Mammary epithelial cell (primary cell): ENCODE measurements at regions of chr6 and their contacts with region 1.

Region 1: DNA sequence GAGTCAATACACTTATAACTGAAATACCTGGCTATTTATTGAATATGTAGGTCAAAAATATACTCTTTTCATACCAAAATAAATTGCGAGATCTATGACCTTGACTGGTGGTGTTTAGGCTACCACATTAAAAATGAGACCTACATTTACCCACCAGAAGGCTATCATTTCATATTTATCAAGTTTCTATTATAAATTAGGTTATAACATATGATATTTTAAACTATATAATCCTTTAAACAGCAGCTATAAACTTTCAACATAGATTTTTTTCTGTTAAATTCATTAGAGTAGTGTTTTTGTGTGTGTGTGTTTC is 586.1 kb downstream of the HTR1B start:
- DNase-seq: no peak
- H3K4me3 ChIP-seq: no peak overlapping the region
- H3K27ac ChIP-seq: no peak overlapping the region
- H3K4me1 ChIP-seq: no peaks in the 10 kb centered on the region
- H3K27me3 ChIP-seq: no peaks in the 10 kb centered on the region
- CTCF ChIP-seq: no peak

Region 2: DNA sequence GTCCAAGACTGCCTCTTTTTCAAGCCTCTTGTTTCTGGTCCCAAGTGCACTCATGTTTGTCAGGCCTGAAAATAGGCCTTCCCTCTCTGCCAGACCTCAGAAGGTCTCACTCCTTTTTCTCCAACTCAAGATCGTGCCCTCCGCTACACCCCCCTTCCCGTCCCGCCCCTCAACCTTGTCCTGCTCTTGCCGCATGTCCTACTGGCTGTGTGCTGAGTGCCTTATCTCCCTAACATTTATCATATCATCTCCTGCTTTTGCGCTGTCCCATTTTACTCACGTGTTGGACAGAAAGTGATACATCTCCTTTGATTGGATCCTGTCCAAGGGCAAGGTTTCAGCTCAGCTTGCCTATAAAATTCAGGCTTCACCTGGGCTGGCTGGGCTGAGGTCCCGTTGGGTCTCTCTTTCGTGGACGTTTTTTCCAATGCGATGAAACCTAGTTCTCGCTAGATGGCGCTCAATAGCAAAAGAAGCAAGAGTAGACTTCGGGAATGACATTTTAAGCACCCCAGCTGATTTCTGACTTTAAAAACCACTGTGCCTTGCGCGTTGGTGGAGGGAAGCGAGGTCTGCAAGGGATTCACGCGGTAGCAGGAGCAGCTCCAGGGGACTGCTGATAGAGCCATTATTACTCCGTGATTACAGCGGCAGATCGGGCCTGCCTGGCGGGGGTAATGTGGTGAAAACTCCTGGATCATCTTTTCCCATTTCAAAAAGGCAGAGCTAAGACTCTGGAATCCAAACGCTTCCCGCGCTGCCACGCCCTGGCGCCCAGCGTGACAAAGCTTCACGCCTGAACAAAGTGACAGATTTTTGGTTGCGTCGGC is 942.3 kb before region 1 on chr6:
- CTCF ChIA-PET with region 1: no interaction called
- dilution Hi-C with region 1: no loop called
- in situ Hi-C with region 1: no loop called
- intact Hi-C with region 1: loop called (anchors 1 kb)
- DNase-seq: peak; percentile 57
- H3K4me3 ChIP-seq: peak overlapping the region; percentile 25 to 44 (median 43)
- H3K27ac ChIP-seq: no peak overlapping the region
- H3K4me1 ChIP-seq: peaks cover 6% of the 10 kb centered on the region
- H3K27me3 ChIP-seq: no peaks in the 10 kb centered on the region
- CTCF ChIP-seq: peak; percentile 66 to 83

Region 3: GRCh38 chr6:76682842-76683241 is 194.4 kb before region 1 on chr6:
- CTCF ChIA-PET with region 1: no interaction called
- dilution Hi-C with region 1: no loop called
- in situ Hi-C with region 1: loop called in 1 of 2 experiments (anchors 25 kb)
- intact Hi-C with region 1: loop called (anchors 1 kb)
- DNase-seq: no peak
- H3K4me3 ChIP-seq: no peak overlapping the region
- H3K27ac ChIP-seq: no peak overlapping the region
- H3K4me1 ChIP-seq: no peaks in the 10 kb centered on the region
- H3K27me3 ChIP-seq: no peaks in the 10 kb centered on the region
- CTCF ChIP-seq: peak; percentile 34 to 41

Region 4: GRCh38 chr6:76697585-76697984 is 179.6 kb before region 1 on chr6:
- CTCF ChIA-PET with region 1: no interaction called
- dilution Hi-C with region 1: no loop called
- in situ Hi-C with region 1: loop called in 1 of 2 experiments (anchors 25 kb)
- intact Hi-C with region 1: loop called (anchors 5 kb)
- DNase-seq: no peak
- H3K4me3 ChIP-seq: no peak overlapping the region
- H3K27ac ChIP-seq: no peak overlapping the region
- H3K4me1 ChIP-seq: no peaks in the 10 kb centered on the region
- H3K27me3 ChIP-seq: no peaks in the 10 kb centered on the region
- CTCF ChIP-seq: peak; percentile 30 to 45